GM12878 (cell line): ENCODE measurements at regions of chr2 and their contacts with region 1.

Region 1: DNA sequence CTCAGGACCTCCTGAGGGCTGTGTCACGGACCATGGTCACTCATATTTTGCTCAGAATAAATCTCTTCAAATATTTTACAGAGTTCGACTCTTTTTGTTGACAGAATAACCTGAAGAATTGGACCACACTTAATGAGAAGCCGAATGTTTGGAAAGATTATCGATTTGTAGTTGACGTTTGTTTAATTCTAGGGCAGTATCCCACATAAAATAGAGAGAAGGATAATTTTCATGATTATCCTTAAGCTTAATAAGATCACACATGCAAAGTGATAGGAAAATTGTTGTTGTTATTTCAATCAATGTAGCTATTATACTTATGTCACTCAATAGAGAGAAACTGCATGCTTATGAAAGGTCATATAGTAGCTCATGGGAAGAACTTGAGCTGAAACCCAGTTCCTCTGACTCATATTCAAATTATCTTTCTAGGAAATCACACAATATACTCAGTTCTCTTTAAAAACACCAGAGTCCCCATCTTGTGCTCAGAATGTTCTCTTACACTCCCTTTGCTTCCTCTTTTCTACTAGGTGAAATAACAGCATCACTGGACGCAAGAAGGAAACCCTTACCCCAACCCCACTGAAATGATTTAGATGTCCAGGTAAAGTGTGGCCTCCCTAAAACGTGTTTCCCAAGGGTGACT is 982.1 kb downstream of the TSN start:
- DNase-seq: peak; percentile 51
- ATAC-seq: peak; percentile 59
- H3K4me3 ChIP-seq: no peak overlapping the region
- H3K27ac ChIP-seq: no peak overlapping the region
- H3K4me1 ChIP-seq: no peaks in the 10 kb centered on the region; the same call in 1 of the 2 replicates
- H3K27me3 ChIP-seq: no peaks in the 10 kb centered on the region
- CTCF ChIP-seq: peak in 1 of 3 experiments; percentile 41; a peak in 1 of 6 replicates
- EP300 ChIP-seq: peak; percentile 58 to 70; a peak in 3 of 4 replicates
- POLR2A ChIP-seq: no peak
- RAD21 ChIP-seq: peak; percentile 54; the same call in 1 of the 2 replicates

Region 2: DNA sequence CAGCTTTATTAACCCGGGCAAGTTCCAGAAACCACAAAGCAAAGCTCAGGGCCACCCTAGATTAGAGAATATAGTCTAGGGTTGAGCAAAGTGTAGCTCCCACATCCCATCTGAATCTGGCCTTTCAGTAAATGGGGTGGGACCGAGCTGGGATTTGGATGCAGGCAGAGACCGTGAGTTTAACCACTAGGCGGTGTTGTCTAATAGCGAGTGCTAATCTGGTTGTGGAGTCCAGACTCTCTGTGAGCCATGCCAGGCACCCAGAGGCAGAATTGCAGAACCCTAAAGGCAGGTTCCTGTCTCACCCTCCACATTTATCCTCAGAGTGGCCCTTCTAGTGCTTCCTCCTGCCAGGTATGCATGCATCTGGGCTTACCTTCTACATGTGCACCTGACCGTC is 546.2 kb before region 1 on chr2:
- CTCF ChIA-PET with region 1: interaction called, 11 read pairs
- POLR2A ChIA-PET with region 1: no interaction called
- RAD21 ChIA-PET with region 1: interaction called, 21 read pairs
- SMC1A ChIA-PET with region 1: interaction called, 13 read pairs
- in situ Hi-C with region 1: no loop called
- intact Hi-C with region 1: no loop called
- DNase-seq: no peak
- ATAC-seq: peak; percentile 95
- H3K4me3 ChIP-seq: no peak overlapping the region
- H3K27ac ChIP-seq: no peak overlapping the region
- H3K4me1 ChIP-seq: no peaks in the 10 kb centered on the region
- H3K27me3 ChIP-seq: no peaks in the 10 kb centered on the region; a peak in 1 of 4 replicates
- CTCF ChIP-seq: peak; percentile 38 to 71 (median 57); a peak in 5 of 6 replicates
- EP300 ChIP-seq: no peak
- POLR2A ChIP-seq: no peak
- RAD21 ChIP-seq: peak; percentile 66

Region 3: DNA sequence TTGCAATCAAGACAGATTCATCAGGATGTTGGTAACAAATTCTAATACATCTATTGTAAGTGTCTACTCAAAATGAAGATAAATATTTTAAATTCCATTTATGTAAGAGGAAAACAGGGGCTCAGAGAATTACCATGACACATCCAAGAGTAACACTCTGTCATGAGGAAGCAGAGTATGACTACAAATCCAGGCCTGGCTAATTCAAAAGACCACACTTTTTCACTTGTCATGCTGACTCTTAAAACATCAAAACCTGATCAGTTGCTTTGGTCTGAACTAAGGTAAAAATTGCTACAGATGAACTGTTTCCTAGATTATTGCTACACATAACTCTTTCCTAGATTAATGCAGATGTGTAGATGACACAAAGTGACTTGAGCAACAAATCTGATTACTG is 101.5 kb before region 1 on chr2:
- CTCF ChIA-PET with region 1: no interaction called
- POLR2A ChIA-PET with region 1: no interaction called
- RAD21 ChIA-PET with region 1: no interaction called
- SMC1A ChIA-PET with region 1: interaction called, 4 read pairs
- in situ Hi-C with region 1: no loop called
- intact Hi-C with region 1: loop called (anchors 5 kb)
- DNase-seq: no peak
- ATAC-seq: peak; percentile 69
- H3K4me3 ChIP-seq: no peak overlapping the region
- H3K27ac ChIP-seq: no peak overlapping the region
- H3K4me1 ChIP-seq: no peaks in the 10 kb centered on the region
- H3K27me3 ChIP-seq: no peaks in the 10 kb centered on the region
- CTCF ChIP-seq: no peak
- EP300 ChIP-seq: no peak
- POLR2A ChIP-seq: no peak
- RAD21 ChIP-seq: no peak

Region 4: DNA sequence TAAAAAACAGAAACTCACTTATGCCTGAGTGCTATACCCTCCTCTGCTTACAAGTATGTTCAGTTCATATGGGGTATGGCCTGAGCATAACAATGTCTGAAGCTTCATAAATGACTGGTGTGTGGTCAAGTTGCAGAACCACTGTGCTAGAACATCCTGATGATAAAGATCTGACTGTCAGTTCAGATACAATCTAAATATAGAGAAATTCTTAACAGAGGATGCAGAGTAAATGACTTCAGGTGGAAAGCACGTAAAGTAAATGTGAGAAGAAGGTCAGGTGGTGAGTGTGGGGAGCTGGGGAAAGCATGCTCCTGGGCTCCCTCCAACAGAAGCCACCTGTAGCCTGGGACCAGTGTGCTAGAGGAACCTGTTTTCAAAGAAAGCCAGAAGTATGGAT is 55.9 kb before region 1 on chr2:
- CTCF ChIA-PET with region 1: interaction called, 3 read pairs
- POLR2A ChIA-PET with region 1: interaction called, 3 read pairs
- RAD21 ChIA-PET with region 1: interaction called, 17 read pairs
- SMC1A ChIA-PET with region 1: interaction called, 32 read pairs
- in situ Hi-C with region 1: no loop called
- intact Hi-C with region 1: no loop called
- DNase-seq: no peak
- ATAC-seq: peak; percentile 68
- H3K4me3 ChIP-seq: no peak overlapping the region
- H3K27ac ChIP-seq: no peak overlapping the region
- H3K4me1 ChIP-seq: no peaks in the 10 kb centered on the region
- H3K27me3 ChIP-seq: no peaks in the 10 kb centered on the region
- CTCF ChIP-seq: no peak
- EP300 ChIP-seq: no peak
- POLR2A ChIP-seq: no peak
- RAD21 ChIP-seq: no peak

Region 5: GRCh38 chr2:122713800-122714199 is 23.8 kb before region 1 on chr2:
- CTCF ChIA-PET with region 1: interaction called, 25 read pairs
- POLR2A ChIA-PET with region 1: interaction called, 21 read pairs
- RAD21 ChIA-PET with region 1: interaction called, 172 read pairs
- SMC1A ChIA-PET with region 1: interaction called, 173 read pairs
- in situ Hi-C with region 1: no loop called
- intact Hi-C with region 1: no loop called
- DNase-seq: no peak
- ATAC-seq: peak; percentile 71
- H3K4me3 ChIP-seq: no peak overlapping the region
- H3K27ac ChIP-seq: no peak overlapping the region
- H3K4me1 ChIP-seq: no peaks in the 10 kb centered on the region
- H3K27me3 ChIP-seq: no peaks in the 10 kb centered on the region
- CTCF ChIP-seq: no peak
- EP300 ChIP-seq: peak in 1 of 2 experiments; percentile 48; a peak in 1 of 4 replicates
- POLR2A ChIP-seq: no peak
- RAD21 ChIP-seq: no peak

Region 6: GRCh38 chr2:122755281-122755780 is 17.8 kb after region 1 on chr2:
- CTCF ChIA-PET with region 1: interaction called, 6 read pairs
- POLR2A ChIA-PET with region 1: interaction called, 5 read pairs
- RAD21 ChIA-PET with region 1: interaction called, 11 read pairs
- SMC1A ChIA-PET with region 1: interaction called, 9 read pairs
- in situ Hi-C with region 1: no loop called
- intact Hi-C with region 1: no loop called
- DNase-seq: no peak
- ATAC-seq: no peak
- H3K4me3 ChIP-seq: no peak overlapping the region
- H3K27ac ChIP-seq: no peak overlapping the region
- H3K4me1 ChIP-seq: no peaks in the 10 kb centered on the region
- H3K27me3 ChIP-seq: no peaks in the 10 kb centered on the region
- CTCF ChIP-seq: no peak
- EP300 ChIP-seq: no peak
- POLR2A ChIP-seq: no peak
- RAD21 ChIP-seq: no peak